ENCODE measurements at regions of chr10 and their contacts with region 1.

Region 1: GRCh38 chr10:96129387-96130325 is at the start of gene ZNF518A:
- DNase-seq: peak; percentile 93
- ATAC-seq: peak; percentile 89
- H3K4me3 Mint-ChIP-seq: peak within 1 kb of the TSS; percentile 88
- H3K27ac Mint-ChIP-seq: peak within 1 kb of the TSS; percentile 95
- H3K4me1 Mint-ChIP-seq: peaks cover 31% of the 10 kb centered on the region
- H3K27me3 Mint-ChIP-seq: peaks cover 27% of the 10 kb centered on the region
- total RNA-seq, gene ZNF518A: 17.3 to 19.2 TPM

Region 2: DNA sequence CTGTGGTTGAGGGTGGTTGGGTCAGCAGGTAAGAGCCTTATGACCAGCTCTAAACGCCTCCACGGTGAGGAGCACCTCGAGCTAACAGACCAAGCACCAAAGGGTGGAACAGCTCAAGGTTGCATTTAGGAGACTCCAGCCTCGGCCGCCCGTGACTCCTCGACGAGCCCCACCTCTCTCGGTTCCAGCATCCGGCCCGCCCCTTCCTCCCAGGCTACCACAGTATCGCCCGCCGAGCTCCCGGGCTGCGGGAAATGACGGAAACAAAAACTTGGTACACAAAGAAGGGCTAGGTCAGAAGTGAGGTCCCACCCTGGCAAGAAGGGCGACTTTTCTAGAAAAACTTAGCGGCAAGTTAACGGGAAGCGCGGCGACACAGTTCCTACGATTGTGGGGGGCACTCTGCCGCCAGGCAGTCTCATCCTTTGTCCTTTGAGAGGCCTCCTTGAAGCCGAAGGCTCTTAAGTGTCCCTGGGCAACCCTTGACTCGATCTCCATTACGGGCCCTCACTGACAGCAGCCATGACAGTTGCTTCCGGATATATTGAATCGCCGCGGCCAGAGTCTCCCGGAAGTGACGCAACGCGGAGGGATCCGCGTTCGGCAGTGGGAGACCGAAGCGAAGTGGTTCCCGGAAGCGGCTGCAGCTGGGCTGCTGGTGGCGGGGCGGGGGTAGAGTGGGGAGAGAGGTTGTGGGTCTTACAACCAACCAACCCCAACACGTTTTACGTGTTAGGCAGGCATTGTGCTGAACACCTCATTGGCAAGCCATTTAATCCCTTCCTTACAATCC is 39.8 kb before region 1 on chr10:
- CTCF ChIA-PET with region 1: interaction called, 25 read pairs
- DNase-seq: peak; percentile 96
- ATAC-seq: peak; percentile 94
- H3K4me3 Mint-ChIP-seq: peak overlapping the region; percentile 87
- H3K27ac Mint-ChIP-seq: peak overlapping the region; percentile 99
- H3K4me1 Mint-ChIP-seq: peaks cover 15% of the 10 kb centered on the region
- H3K27me3 Mint-ChIP-seq: peaks cover 16% of the 10 kb centered on the region

Region 3: DNA sequence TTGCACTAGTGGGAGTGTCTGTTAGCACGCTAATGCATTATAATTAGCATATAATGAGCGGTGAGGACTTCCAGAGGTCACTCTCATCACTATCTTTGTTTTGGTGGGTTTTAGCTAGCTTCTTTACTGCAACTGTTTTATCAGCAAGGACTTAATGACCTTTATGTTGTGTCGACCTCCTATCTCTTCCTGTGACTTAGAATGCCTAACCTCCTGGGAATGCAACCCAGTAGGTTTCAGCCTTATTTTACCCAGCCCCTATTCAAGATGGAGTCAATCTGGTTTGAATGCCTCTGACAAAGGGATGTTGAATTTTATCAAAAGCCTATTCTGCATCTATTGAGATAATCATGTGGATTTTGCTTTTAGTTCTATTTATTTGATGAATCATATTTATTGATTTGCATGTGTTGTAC is 22.0 kb before region 1 on chr10:
- CTCF ChIA-PET with region 1: no interaction called
- DNase-seq: no peak
- ATAC-seq: no peak
- H3K4me3 Mint-ChIP-seq: no peak overlapping the region
- H3K27ac Mint-ChIP-seq: no peak overlapping the region
- H3K4me1 Mint-ChIP-seq: peaks cover 1% of the 10 kb centered on the region
- H3K27me3 Mint-ChIP-seq: peaks cover 69% of the 10 kb centered on the region

Region 4: GRCh38 chr10:96153070-96153469 is 23.4 kb after region 1 on chr10:
- CTCF ChIA-PET with region 1: no interaction called
- DNase-seq: no peak
- ATAC-seq: no peak
- H3K4me3 Mint-ChIP-seq: no peak overlapping the region
- H3K27ac Mint-ChIP-seq: no peak overlapping the region
- H3K4me1 Mint-ChIP-seq: peaks cover 15% of the 10 kb centered on the region
- H3K27me3 Mint-ChIP-seq: no peaks in the 10 kb centered on the region

Region 5: GRCh38 chr10:96165736-96166135 is 36.1 kb after region 1 on chr10:
- CTCF ChIA-PET with region 1: no interaction called
- DNase-seq: no peak
- ATAC-seq: no peak
- H3K4me3 Mint-ChIP-seq: no peak overlapping the region
- H3K27ac Mint-ChIP-seq: no peak overlapping the region
- H3K4me1 Mint-ChIP-seq: no peaks in the 10 kb centered on the region
- H3K27me3 Mint-ChIP-seq: peaks cover 4% of the 10 kb centered on the region

Region 6: GRCh38 chr10:96596422-96597407 is 467.1 kb after region 1 on chr10:
- CTCF ChIA-PET with region 1: no interaction called
- DNase-seq: no peak
- ATAC-seq: no peak
- H3K4me3 Mint-ChIP-seq: no peak overlapping the region
- H3K27ac Mint-ChIP-seq: no peak overlapping the region
- H3K4me1 Mint-ChIP-seq: peaks cover 3% of the 10 kb centered on the region
- H3K27me3 Mint-ChIP-seq: no peaks in the 10 kb centered on the region

Measured in activated CD8-positive, alpha-beta memory T cell treated with anti-CD3 and anti-CD28 coated beads, Interleukin-2, amount 10 ng/mL, durations not matched to agents 7 days and 5 days (primary cell).